ENCODE measurements at regions of chr17 and their contacts with region 1.

Region 1: GRCh38 chr17:36601303-36602029 is at the start of gene MRM1:
- DNase-seq: peak; percentile 89 to 96
- ATAC-seq: peak; percentile 81 to 92
- H3K4me3 ChIP-seq: peak within 1 kb of the TSS; percentile 66
- H3K27ac ChIP-seq: peak within 1 kb of the TSS; percentile 87 to 94
- H3K4me1 ChIP-seq: peaks cover 24% of the 10 kb centered on the region
- CTCF ChIP-seq: peak; percentile 33; the same call in 2 of the 3 replicates
- EP300 ChIP-seq: no peak
- POLR2A ChIP-seq: peak; percentile 97
- RAD21 ChIP-seq: no peak
- polyA plus RNA-seq, gene MRM1: 11.1 and 12.7 TPM in 2 replicates

Region 2: DNA sequence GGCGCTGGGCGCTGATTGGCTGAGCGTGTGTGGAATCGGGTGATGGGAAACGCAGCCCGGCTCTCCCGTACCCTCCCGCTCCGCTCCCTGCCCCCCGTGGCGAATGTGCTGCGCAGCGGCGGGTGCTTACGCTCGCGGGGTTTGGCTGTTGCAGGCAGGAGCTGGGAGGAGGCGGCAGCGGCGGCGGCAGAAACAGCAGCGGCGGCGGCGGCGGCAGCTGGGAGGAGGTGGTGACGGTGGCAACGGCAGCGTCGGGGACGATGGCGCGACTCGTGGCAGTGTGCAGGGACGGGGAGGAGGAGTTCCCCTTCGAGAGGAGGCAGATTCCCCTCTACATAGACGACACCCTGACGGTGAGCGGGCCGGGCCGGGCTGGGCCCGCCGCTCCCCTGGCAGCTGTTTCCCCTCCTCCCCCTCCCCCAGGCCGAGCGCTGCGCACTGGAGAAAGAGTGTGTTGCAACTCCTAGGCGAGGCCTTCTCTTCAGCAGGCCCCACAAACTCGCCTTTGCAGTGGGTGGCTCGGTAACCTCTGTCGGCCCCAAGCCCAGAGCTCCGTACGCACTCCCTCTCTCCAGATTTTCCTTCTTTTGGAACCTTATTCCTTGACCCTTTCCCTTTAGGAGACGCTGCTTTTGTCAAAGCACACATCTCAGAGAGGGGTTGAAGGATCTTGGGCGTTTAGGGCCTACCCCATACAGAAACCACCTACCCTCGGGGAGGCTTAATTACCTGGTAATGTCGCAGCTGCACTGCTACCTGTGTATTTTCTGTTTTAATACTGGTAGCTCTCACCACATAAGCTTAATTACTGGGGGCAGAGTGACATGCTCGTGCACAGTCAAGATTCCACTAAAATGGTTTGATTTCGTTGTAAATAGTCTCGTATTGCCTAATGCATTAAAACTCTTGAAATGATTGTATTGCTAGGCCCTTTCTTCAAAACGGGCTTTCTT is 55.7 kb before region 1 on chr17:
- CTCF ChIA-PET with region 1: interaction called, 15 read pairs
- POLR2A ChIA-PET with region 1: interaction called, 35 read pairs
- DNase-seq: peak; percentile 98 to 99
- ATAC-seq: peak; percentile 83 to 89
- H3K4me3 ChIP-seq: peak overlapping the region; percentile 81
- H3K27ac ChIP-seq: peak overlapping the region; percentile 96 to 97
- H3K4me1 ChIP-seq: peaks cover 28% of the 10 kb centered on the region
- CTCF ChIP-seq: no peak
- EP300 ChIP-seq: no peak
- POLR2A ChIP-seq: peak; percentile 44
- RAD21 ChIP-seq: no peak

Region 3: DNA sequence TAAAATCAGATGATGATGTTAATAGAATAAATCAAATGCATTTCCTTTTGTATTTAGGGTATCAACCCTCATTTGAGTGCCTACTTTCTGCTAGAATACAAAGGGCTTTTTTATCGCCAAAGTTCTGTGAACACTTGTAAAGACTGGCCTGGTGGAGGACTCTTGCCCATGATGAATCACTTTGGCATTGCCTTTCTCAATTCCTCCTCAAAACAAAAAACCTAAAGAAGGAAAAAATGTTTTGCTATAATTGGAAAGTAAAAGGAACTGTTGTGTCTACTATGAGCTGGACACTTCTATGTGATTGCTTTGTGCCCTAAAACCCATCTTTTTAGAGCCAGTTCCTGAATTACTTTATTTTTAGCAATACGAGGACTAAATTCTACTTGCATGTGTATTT is 22.8 kb before region 1 on chr17:
- CTCF ChIA-PET with region 1: interaction called, 10 read pairs
- POLR2A ChIA-PET with region 1: interaction called, 4 read pairs
- DNase-seq: no peak
- ATAC-seq: no peak
- H3K4me3 ChIP-seq: no peak overlapping the region
- H3K27ac ChIP-seq: no peak overlapping the region
- H3K4me1 ChIP-seq: no peaks in the 10 kb centered on the region
- CTCF ChIP-seq: no peak
- EP300 ChIP-seq: no peak
- POLR2A ChIP-seq: no peak
- RAD21 ChIP-seq: no peak

Region 4: GRCh38 chr17:36623281-36623680 is 21.8 kb after region 1 on chr17:
- CTCF ChIA-PET with region 1: interaction called, 96 read pairs
- POLR2A ChIA-PET with region 1: no interaction called
- DNase-seq: no peak
- ATAC-seq: no peak
- H3K4me3 ChIP-seq: no peak overlapping the region
- H3K27ac ChIP-seq: no peak overlapping the region
- H3K4me1 ChIP-seq: no peaks in the 10 kb centered on the region
- CTCF ChIP-seq: no peak
- EP300 ChIP-seq: no peak
- POLR2A ChIP-seq: no peak
- RAD21 ChIP-seq: no peak

Region 5: DNA sequence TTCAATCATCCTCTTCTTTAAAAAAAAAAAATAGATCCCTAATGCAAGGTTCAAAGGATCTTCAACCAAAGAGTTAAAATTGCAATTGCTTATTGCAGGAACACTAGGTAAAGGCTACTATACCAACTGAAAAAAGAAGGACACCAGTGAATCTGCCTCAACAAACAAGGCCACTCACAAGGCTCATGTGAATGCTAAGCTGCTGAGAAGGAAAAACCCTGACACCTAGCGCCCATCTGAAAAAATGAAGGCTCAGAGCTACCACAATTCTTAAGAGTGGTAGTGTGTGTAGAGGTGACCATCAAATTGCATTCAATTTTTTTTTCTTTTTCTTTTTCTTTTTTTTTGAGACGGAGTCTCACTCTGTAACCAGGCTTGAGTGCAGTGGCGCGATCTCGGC is 572.7 kb after region 1 on chr17:
- CTCF ChIA-PET with region 1: interaction called, 17 read pairs
- POLR2A ChIA-PET with region 1: interaction called, 3 read pairs
- DNase-seq: peak; percentile 48 to 70
- ATAC-seq: peak; percentile 95 to 97
- H3K4me3 ChIP-seq: no peak overlapping the region
- H3K27ac ChIP-seq: no peak overlapping the region
- H3K4me1 ChIP-seq: 0 out of 3 replicates have a peak, but pooled peaks cover under 1% of the 10 kb centered on the region
- CTCF ChIP-seq: peak; percentile 60
- EP300 ChIP-seq: no peak
- POLR2A ChIP-seq: no peak
- RAD21 ChIP-seq: peak; percentile 65 to 68

Measured in A549 (cell line).